CD8-positive, alpha-beta memory T cell (primary cell): ENCODE measurements at regions of chr7 and their contacts with region 1.

Region 1: GRCh38 chr7:105849122-105849855 is 27.1 kb downstream of the ATXN7L1 start:
- DNase-seq: peak; percentile 49 to 86 (median 62)
- H3K4me3 ChIP-seq: peak overlapping the region; percentile 25
- H3K4me3 Mint-ChIP-seq: peak overlapping the region; percentile 13 to 81 (median 75)
- H3K27ac ChIP-seq: peak overlapping the region; percentile 59
- H3K27ac Mint-ChIP-seq: peak overlapping the region; percentile 80 to 98 (median 94)
- H3K4me1 ChIP-seq: peaks cover 56% of the 10 kb centered on the region
- H3K4me1 Mint-ChIP-seq: peaks cover 73 to 85% (median 76%) of the 10 kb centered on the region in 3 donors
- H3K27me3 ChIP-seq: no peaks in the 10 kb centered on the region
- H3K27me3 Mint-ChIP-seq: no peaks in the 10 kb centered on the region

Region 2: GRCh38 chr7:105664816-105665525 is 184.3 kb before region 1 on chr7:
- CTCF ChIA-PET with region 1: no interaction called
- POLR2A ChIA-PET with region 1: no interaction called
- DNase-seq: no peak
- H3K4me3 ChIP-seq: no peak overlapping the region
- H3K4me3 Mint-ChIP-seq: no peak overlapping the region
- H3K27ac ChIP-seq: no peak overlapping the region
- H3K27ac Mint-ChIP-seq: peak overlapping the region in 4 of 8 donors; percentile 4 to 72 (median 50)
- H3K4me1 ChIP-seq: no peaks in the 10 kb centered on the region
- H3K4me1 Mint-ChIP-seq: peaks cover 2 to 10% (median 5%) of the 10 kb centered on the region in 3 donors
- H3K27me3 ChIP-seq: no peaks in the 10 kb centered on the region
- H3K27me3 Mint-ChIP-seq: no peaks in the 10 kb centered on the region

Region 3: GRCh38 chr7:105808703-105809590 is 40.3 kb before region 1 on chr7:
- CTCF ChIA-PET with region 1: interaction called, 8 read pairs
- POLR2A ChIA-PET with region 1: interaction called, 14 read pairs
- DNase-seq: peak; percentile 25 to 85 (median 54)
- H3K4me3 ChIP-seq: peak overlapping the region; percentile 17
- H3K4me3 Mint-ChIP-seq: peak overlapping the region; percentile 0 to 87 (median 54)
- H3K27ac ChIP-seq: no peak overlapping the region
- H3K27ac Mint-ChIP-seq: peak overlapping the region; percentile 53 to 91 (median 80)
- H3K4me1 ChIP-seq: peaks cover 46% of the 10 kb centered on the region
- H3K4me1 Mint-ChIP-seq: peaks cover 56 to 74% (median 70%) of the 10 kb centered on the region in 3 donors
- H3K27me3 ChIP-seq: no peaks in the 10 kb centered on the region
- H3K27me3 Mint-ChIP-seq: no peaks in the 10 kb centered on the region